Activated CD8-positive, alpha-beta T cell treated with anti-CD3 and anti-CD28 coated beads for 36 hours (primary cell): ENCODE measurements at regions of chr11 and their contacts with region 1.

Region 1: GRCh38 chr11:57667736-57668435 is at the start of gene ZDHHC5:
- DNase-seq: peak; percentile 99
- ATAC-seq: peak; percentile 86
- H3K4me3 Mint-ChIP-seq: peak within 1 kb of the TSS; percentile 95
- H3K27ac Mint-ChIP-seq: peak within 1 kb of the TSS; percentile 99
- H3K4me1 Mint-ChIP-seq: peaks cover 36% of the 10 kb centered on the region
- H3K27me3 Mint-ChIP-seq: no peaks in the 10 kb centered on the region
- CTCF ChIP-seq: peak; percentile 26
- total RNA-seq, gene ZDHHC5: 53.7 to 54.8 TPM

Region 2: DNA sequence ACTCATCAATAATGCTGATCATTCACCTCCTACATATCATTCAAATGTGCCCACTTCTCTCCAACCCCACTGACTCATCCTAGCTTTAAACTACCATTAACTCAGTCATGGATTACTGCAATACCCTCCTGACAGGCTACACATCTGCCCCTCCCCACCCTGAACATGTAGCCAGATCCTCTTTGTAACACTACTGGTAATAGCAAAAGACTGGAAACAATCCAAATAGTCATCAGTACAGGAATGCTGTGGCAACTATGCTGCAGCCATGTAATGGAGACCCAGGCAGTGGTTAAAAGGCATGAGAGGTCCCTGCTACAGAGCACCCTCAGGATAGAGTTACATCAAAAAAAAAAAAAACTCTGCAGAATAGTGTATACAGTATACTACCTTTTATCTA is 257.6 kb before region 1 on chr11:
- CTCF ChIA-PET with region 1: no interaction called
- POLR2A ChIA-PET with region 1: no interaction called
- intact Hi-C with region 1: no loop called
- DNase-seq: no peak
- ATAC-seq: no peak
- H3K4me3 Mint-ChIP-seq: no peak overlapping the region
- H3K27ac Mint-ChIP-seq: peak overlapping the region; percentile 74
- H3K4me1 Mint-ChIP-seq: peaks cover 80% of the 10 kb centered on the region
- H3K27me3 Mint-ChIP-seq: no peaks in the 10 kb centered on the region
- CTCF ChIP-seq: no peak

Region 3: GRCh38 chr11:57657194-57658022 is 10.5 kb before region 1 on chr11 and contains the start of gene CLP1:
- CTCF ChIA-PET with region 1: interaction called, 4 read pairs
- POLR2A ChIA-PET with region 1: interaction called, 28 read pairs
- intact Hi-C with region 1: loop called (anchors 1 kb)
- DNase-seq: peak; percentile 100
- ATAC-seq: peak; percentile 98
- H3K4me3 Mint-ChIP-seq: peak within 1 kb of the TSS; percentile 90
- H3K27ac Mint-ChIP-seq: peak within 1 kb of the TSS; percentile 97
- H3K4me1 Mint-ChIP-seq: peaks cover 33% of the 10 kb centered on the region
- H3K27me3 Mint-ChIP-seq: no peaks in the 10 kb centered on the region
- CTCF ChIP-seq: no peak
- total RNA-seq, gene CLP1: 16.2 to 16.9 TPM

Region 4: DNA sequence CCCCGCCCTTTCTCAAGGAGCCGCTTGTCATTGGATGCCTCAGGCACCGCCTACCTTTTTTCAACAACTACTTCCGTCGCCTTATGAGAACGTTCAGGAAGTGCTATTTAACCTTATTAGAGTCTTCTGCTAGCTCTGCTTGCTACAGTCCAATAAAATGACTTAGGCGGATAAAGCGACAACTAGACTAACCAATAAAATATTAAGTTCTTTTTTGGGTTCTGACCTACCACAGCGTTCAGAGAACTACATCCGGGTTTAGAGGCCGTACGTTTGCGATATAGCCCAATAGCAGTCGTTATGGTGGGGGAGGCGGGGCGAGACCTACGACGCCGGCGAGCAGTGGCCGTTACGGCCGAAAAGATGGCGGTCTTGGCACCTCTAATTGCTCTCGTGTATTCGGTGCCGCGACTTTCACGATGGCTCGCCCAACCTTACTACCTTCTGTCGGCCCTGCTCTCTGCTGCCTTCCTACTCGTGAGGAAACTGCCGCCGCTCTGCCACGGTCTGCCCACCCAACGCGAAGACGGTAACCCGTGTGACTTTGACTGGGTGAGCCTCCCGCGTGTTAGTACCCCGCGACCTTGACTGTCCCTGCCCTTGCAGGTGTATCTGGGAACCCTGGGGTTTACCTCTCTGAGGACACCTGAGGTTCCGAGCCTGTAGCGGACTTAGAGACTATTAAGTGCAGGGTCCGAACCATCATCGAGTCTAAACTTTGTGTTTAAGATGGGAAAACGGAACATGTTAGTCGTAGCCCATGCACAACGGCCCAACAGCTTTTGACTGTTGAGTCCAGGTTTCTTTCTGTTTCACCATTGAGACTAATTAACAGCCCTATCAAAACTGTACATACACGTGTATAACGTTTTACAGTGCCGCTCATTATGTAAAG is 44.6 kb after region 1 on chr11 and contains the start of gene TMX2:
- CTCF ChIA-PET with region 1: no interaction called
- POLR2A ChIA-PET with region 1: no interaction called
- intact Hi-C with region 1: loop called (anchors 5 kb)
- DNase-seq: peak; percentile 97
- ATAC-seq: peak; percentile 91
- H3K4me3 Mint-ChIP-seq: peak within 1 kb of the TSS; percentile 85
- H3K27ac Mint-ChIP-seq: peak within 1 kb of the TSS; percentile 90
- H3K4me1 Mint-ChIP-seq: peaks cover 46% of the 10 kb centered on the region
- H3K27me3 Mint-ChIP-seq: no peaks in the 10 kb centered on the region
- CTCF ChIP-seq: no peak
- total RNA-seq, gene TMX2: 53.1 to 58.6 TPM